CD4-positive, alpha-beta memory T cell (primary cell): ENCODE measurements at regions of chr1 and their contacts with region 1.

Region 1: DNA sequence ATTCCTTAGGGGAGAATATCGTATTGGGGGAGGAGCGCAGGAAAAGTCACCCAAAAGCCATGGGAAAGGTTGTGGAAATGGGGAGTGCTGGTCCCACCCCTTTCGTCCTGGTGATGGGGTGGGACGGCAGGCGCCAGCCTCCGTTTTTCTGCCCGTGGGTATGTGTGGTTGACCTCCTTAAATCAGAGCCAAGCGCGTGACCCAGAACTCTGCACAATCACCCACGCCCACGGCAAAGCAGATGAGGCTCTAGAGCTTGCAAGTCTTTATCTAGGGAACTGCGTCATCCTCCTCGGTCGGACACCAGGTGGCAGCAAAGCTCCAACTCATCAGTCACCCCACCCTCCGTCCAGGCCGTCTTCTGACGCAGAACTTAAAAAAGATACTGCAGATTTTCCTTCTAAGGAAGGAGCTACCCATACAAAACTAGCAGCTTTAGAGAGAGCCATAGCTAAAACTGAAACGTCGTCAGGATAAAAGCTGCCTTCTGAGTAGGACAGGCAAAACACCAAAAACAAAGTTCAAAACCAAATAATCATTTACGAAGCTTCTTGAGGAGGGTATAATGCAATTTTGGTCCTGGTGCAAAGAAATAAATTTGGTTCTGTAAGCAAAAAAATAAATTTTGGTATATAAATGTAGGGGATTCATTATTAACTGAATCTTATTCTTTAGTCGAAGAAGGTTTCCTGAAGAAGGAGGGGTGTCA is 62.0 kb downstream of the TBX19 start:
- DNase-seq: peak; percentile 86 to 91 (median 89)
- H3K4me3 ChIP-seq: no peak overlapping the region
- H3K4me3 Mint-ChIP-seq: peak overlapping the region; percentile 55 to 82 (median 64)
- H3K27ac ChIP-seq: peak overlapping the region; percentile 17
- H3K27ac Mint-ChIP-seq: peak overlapping the region; percentile 91 to 97 (median 93)
- H3K4me1 ChIP-seq: peaks cover 34% of the 10 kb centered on the region
- H3K4me1 Mint-ChIP-seq: peaks cover 34 to 74% (median 49%) of the 10 kb centered on the region in 4 donors
- H3K27me3 ChIP-seq: no peaks in the 10 kb centered on the region
- H3K27me3 Mint-ChIP-seq: no peaks in the 10 kb centered on the region

Region 2: GRCh38 chr1:167973832-167974231 is 368.9 kb before region 1 on chr1:
- CTCF ChIA-PET with region 1: no interaction called
- POLR2A ChIA-PET with region 1: no interaction called
- intact Hi-C with region 1: no loop called
- DNase-seq: no peak
- H3K4me3 ChIP-seq: no peak overlapping the region
- H3K4me3 Mint-ChIP-seq: no peak overlapping the region
- H3K27ac ChIP-seq: no peak overlapping the region
- H3K27ac Mint-ChIP-seq: peak overlapping the region in 1 of 7 donors; percentile 36
- H3K4me1 ChIP-seq: no peaks in the 10 kb centered on the region
- H3K4me1 Mint-ChIP-seq: peaks cover 0 to 13% (median 6%) of the 10 kb centered on the region in 4 donors
- H3K27me3 ChIP-seq: no peaks in the 10 kb centered on the region
- H3K27me3 Mint-ChIP-seq: no peaks in the 10 kb centered on the region

Region 3: GRCh38 chr1:168234846-168235547 is 107.7 kb before region 1 on chr1:
- CTCF ChIA-PET with region 1: interaction called, 22 read pairs
- POLR2A ChIA-PET with region 1: interaction called, 3 read pairs
- intact Hi-C with region 1: no loop called
- DNase-seq: peak; percentile 29 to 59 (median 39)
- H3K4me3 ChIP-seq: no peak overlapping the region
- H3K4me3 Mint-ChIP-seq: no peak overlapping the region
- H3K27ac ChIP-seq: no peak overlapping the region
- H3K27ac Mint-ChIP-seq: peak overlapping the region in 4 of 7 donors; percentile 15 to 51 (median 30)
- H3K4me1 ChIP-seq: peaks cover 22% of the 10 kb centered on the region
- H3K4me1 Mint-ChIP-seq: peaks cover 40 to 66% (median 53%) of the 10 kb centered on the region in 4 donors
- H3K27me3 ChIP-seq: no peaks in the 10 kb centered on the region
- H3K27me3 Mint-ChIP-seq: no peaks in the 10 kb centered on the region

Region 4: GRCh38 chr1:168381850-168382249 is 39.1 kb after region 1 on chr1:
- CTCF ChIA-PET with region 1: interaction called, 32 read pairs
- POLR2A ChIA-PET with region 1: interaction called, 3 read pairs
- intact Hi-C with region 1: no loop called
- DNase-seq: no peak
- H3K4me3 ChIP-seq: no peak overlapping the region
- H3K4me3 Mint-ChIP-seq: no peak overlapping the region
- H3K27ac ChIP-seq: no peak overlapping the region
- H3K27ac Mint-ChIP-seq: no peak overlapping the region
- H3K4me1 ChIP-seq: peaks cover 3% of the 10 kb centered on the region
- H3K4me1 Mint-ChIP-seq: peaks cover under 1 to 4% (median 1%) of the 10 kb centered on the region in 4 donors
- H3K27me3 ChIP-seq: no peaks in the 10 kb centered on the region
- H3K27me3 Mint-ChIP-seq: peaks cover 0 to 2% of the 10 kb centered on the region in 2 donors

Region 5: GRCh38 chr1:168433238-168433637 is 90.5 kb after region 1 on chr1:
- CTCF ChIA-PET with region 1: interaction called, 249 read pairs
- POLR2A ChIA-PET with region 1: interaction called, 5 read pairs
- intact Hi-C with region 1: no loop called
- DNase-seq: no peak
- H3K4me3 ChIP-seq: no peak overlapping the region
- H3K4me3 Mint-ChIP-seq: no peak overlapping the region
- H3K27ac ChIP-seq: no peak overlapping the region
- H3K27ac Mint-ChIP-seq: no peak overlapping the region
- H3K4me1 ChIP-seq: no peaks in the 10 kb centered on the region
- H3K4me1 Mint-ChIP-seq: peaks cover 0 to 4% (median 1%) of the 10 kb centered on the region in 4 donors
- H3K27me3 ChIP-seq: no peaks in the 10 kb centered on the region
- H3K27me3 Mint-ChIP-seq: peaks cover 0 to 1% of the 10 kb centered on the region in 2 donors

Region 6: DNA sequence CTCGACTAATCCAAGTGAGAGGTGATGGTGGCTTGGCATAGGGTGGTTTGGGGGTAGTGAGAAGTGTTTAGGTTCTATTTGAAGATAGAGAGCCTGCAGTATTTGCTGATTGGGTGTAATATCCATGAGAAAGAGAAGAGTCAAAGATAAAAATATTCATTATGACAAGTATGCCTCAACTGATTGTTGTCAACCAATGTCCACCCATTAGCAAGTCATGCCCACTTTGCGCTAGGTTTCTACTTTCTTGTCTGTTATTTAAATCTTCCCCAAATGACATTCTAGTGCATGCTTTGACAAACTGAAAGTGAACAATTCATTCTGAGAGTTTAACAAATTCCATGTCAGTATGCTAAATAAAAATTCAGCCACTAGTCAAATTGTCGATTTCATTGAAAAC is 229.9 kb after region 1 on chr1:
- CTCF ChIA-PET with region 1: interaction called, 10 read pairs
- POLR2A ChIA-PET with region 1: interaction called, 3 read pairs
- intact Hi-C with region 1: no loop called
- DNase-seq: no peak
- H3K4me3 ChIP-seq: no peak overlapping the region
- H3K4me3 Mint-ChIP-seq: no peak overlapping the region
- H3K27ac ChIP-seq: no peak overlapping the region
- H3K27ac Mint-ChIP-seq: no peak overlapping the region
- H3K4me1 ChIP-seq: no peaks in the 10 kb centered on the region
- H3K4me1 Mint-ChIP-seq: peaks cover 8 to 17% (median 14%) of the 10 kb centered on the region in 4 donors
- H3K27me3 ChIP-seq: no peaks in the 10 kb centered on the region
- H3K27me3 Mint-ChIP-seq: peaks cover 0 to 2% of the 10 kb centered on the region in 2 donors

Region 7: DNA sequence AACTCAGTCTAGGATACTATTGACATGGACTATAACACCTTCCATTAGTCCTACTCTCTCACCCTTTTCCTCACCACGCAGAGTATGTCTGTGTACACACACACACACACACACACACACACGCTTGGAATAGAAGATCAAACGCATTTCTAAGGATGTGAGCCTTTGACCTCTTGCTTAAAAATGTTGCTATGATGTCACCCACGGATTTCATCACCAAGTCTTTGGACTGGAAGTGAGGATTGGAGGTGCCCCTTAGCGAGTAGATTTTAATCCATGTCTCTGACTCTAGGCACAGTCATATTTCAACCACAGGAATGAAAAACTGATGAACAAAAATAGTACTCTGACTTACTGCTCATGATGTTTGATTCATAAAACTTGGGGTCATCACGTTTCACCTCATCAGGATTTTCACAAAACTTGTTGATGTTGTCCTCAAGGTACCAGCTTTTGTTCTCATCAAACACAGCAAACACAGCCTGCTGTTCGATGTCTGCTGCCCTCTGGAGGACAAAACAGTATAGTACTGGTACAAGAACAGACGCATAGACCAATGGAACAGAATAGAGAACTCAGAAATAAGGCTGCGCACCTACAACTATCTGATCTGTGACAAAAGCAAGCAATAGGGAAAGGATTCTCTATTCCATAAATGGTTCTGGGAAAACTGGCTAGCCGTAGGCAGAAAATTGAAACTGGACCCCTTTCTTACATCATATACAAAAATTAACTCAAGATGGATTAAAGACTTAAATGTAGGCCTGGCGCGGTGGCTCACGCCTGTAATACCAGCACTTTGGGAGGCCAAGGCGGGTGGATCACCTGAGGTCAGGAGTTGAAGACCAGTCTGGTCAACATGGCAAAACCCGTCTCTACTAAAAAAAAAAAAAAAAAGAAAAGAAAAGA is 1203.6 kb after region 1 on chr1:
- CTCF ChIA-PET with region 1: interaction called, 3 read pairs
- POLR2A ChIA-PET with region 1: no interaction called
- intact Hi-C with region 1: loop called (anchors 2 kb)
- DNase-seq: peak; percentile 65 to 68 (median 66)
- H3K4me3 ChIP-seq: no peak overlapping the region
- H3K4me3 Mint-ChIP-seq: no peak overlapping the region
- H3K27ac ChIP-seq: no peak overlapping the region
- H3K27ac Mint-ChIP-seq: no peak overlapping the region
- H3K4me1 ChIP-seq: no peaks in the 10 kb centered on the region
- H3K4me1 Mint-ChIP-seq: peaks cover 0 to 2% (median under 1%) of the 10 kb centered on the region in 4 donors
- H3K27me3 ChIP-seq: no peaks in the 10 kb centered on the region
- H3K27me3 Mint-ChIP-seq: no peaks in the 10 kb centered on the region